Heart left ventricle (tissue), 16 donors: ENCODE measurements at regions of chr2 and their contacts with region 1.

Region 1: GRCh38 chr2:120680136-120680761 is 55.4 kb upstream of the GLI2 start:
- DNase-seq: peak; percentile 76 to 89 (median 79)
- ATAC-seq: peak; percentile 49 to 89 (median 78)
- H3K4me3 ChIP-seq: no peak overlapping the region
- H3K27ac ChIP-seq: no peak overlapping the region
- H3K4me1 ChIP-seq: peaks cover 0 to 5% (median 0%) of the 10 kb centered on the region in 12 donors
- H3K27me3 ChIP-seq: peaks cover 0 to 39% (median 9%) of the 10 kb centered on the region in 9 donors
- CTCF ChIP-seq: peak; percentile 32 to 62 (median 49)
- POLR2A ChIP-seq: no peak

Region 2: DNA sequence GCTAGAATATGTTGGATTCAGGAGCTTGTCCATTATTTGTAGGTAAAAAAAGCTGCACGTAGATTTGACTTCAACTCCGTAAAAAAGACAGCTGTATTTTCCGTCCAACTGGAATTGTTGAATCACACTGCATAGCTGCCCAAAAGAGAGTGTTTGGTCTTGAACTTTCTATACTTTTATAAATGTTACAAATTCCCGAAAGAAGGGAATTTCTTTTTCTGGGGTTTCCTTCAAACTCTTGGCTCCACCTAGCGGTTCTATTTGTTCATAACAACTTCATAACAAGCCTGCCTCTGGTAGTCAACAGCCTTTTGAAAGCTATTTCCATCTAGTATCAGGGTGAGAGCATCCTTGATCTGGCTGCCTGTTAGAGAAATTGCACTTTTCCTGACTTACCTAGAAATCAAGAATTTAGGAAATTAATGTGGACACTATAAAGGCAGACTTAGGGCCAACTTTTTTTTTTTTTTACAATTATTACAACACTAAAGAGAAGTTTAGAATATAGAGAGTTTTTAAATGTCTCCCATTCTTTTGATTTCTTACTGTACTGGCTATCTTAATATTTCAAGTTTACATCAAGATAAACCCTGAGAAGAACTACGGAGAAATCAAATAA is 505.2 kb before region 1 on chr2:
- intact Hi-C with region 1: loop called in 1 of 10 experiments (anchors 10 kb)
- DNase-seq: no peak
- ATAC-seq: peak in 2 of 4 donors; percentile 18 to 51
- H3K4me3 ChIP-seq: no peak overlapping the region
- H3K27ac ChIP-seq: no peak overlapping the region
- H3K4me1 ChIP-seq: peaks cover 0 to 20% (median 8%) of the 10 kb centered on the region in 12 donors
- H3K27me3 ChIP-seq: no peaks in the 10 kb centered on the region
- CTCF ChIP-seq: peak; percentile 66 to 83 (median 77)
- POLR2A ChIP-seq: no peak

Region 3: DNA sequence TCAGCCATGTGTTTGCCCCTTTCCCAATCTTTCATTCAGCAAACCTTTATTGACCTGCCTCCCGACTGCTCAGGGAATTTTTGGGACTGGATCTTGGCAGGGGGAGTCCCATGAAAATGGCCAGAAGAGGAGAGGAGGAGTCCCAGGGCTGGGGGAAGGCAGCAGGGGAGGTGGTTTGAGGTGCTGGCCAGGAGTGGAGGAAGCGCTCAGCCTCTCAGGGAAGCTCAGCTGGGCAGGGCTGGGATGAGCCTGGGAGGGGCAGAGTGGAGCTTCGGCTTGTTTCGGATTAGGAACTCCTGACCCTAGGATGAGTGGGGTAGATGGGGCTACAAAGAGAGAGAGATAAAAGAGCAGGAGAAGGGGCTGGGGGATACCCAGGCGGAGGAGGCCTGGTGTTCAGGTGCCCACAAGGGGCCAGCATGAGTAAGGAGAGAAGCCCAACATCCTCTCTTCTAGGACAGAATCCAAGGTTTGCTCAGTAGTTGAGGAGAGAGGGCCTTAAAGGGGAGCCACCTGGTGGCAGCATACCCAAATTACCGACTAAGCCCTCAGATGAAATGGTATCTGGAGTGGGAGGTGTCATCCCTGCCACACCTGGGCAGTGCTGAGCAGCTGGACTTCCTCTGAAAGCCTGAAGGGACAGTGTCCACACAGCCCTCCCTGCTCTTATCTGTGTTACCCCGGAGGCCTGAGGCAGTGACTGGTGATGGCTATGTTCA is 243.2 kb before region 1 on chr2:
- intact Hi-C with region 1: loop called in 1 of 10 experiments (anchors 10 kb)
- DNase-seq: no peak
- ATAC-seq: no peak
- H3K4me3 ChIP-seq: no peak overlapping the region
- H3K27ac ChIP-seq: no peak overlapping the region
- H3K4me1 ChIP-seq: peaks cover 0 to 4% (median 4%) of the 10 kb centered on the region in 12 donors
- H3K27me3 ChIP-seq: peaks cover 0 to 29% (median 9%) of the 10 kb centered on the region in 9 donors
- CTCF ChIP-seq: peak in 8 of 12 donors; percentile 6 to 35 (median 17)
- POLR2A ChIP-seq: no peak

Region 4: GRCh38 chr2:120511947-120512710 is 168.1 kb before region 1 on chr2:
- intact Hi-C with region 1: loop called in 5 of 10 experiments (anchors 5 to 10 kb)
- DNase-seq: no peak
- ATAC-seq: peak in 2 of 4 donors; percentile 37 to 46
- H3K4me3 ChIP-seq: no peak overlapping the region
- H3K27ac ChIP-seq: no peak overlapping the region
- H3K4me1 ChIP-seq: peaks cover 0 to 20% (median 8%) of the 10 kb centered on the region in 12 donors
- H3K27me3 ChIP-seq: no peaks in the 10 kb centered on the region
- CTCF ChIP-seq: peak in 2 of 12 donors; percentile 11 to 23
- POLR2A ChIP-seq: no peak

Region 5: DNA sequence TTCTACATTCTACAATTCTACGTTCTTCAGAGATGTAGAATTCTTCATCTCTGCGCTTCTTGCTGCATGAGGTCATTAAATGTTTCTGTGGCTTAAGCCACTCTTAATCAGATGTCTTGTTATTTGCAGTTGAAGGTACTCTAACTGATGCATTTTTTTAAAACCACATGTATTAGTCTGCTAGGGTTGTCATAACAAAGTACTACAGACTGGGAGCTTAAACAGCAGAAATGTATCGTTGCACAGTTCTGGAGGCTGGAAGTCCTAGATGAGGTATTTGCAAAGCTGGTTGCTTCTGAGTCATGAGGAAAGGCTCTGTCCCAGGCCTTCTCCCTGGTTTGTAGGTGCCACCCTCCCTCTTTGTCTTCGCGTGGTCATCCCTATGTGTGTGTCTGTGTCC is 120.8 kb before region 1 on chr2:
- intact Hi-C with region 1: loop called in 5 of 10 experiments (anchors 5 to 10 kb)
- DNase-seq: no peak
- ATAC-seq: peak in 1 of 4 donors; percentile 5
- H3K4me3 ChIP-seq: no peak overlapping the region
- H3K27ac ChIP-seq: no peak overlapping the region
- H3K4me1 ChIP-seq: peaks cover 0 to 12% (median 0%) of the 10 kb centered on the region in 12 donors
- H3K27me3 ChIP-seq: no peaks in the 10 kb centered on the region
- CTCF ChIP-seq: no peak
- POLR2A ChIP-seq: no peak

Region 6: DNA sequence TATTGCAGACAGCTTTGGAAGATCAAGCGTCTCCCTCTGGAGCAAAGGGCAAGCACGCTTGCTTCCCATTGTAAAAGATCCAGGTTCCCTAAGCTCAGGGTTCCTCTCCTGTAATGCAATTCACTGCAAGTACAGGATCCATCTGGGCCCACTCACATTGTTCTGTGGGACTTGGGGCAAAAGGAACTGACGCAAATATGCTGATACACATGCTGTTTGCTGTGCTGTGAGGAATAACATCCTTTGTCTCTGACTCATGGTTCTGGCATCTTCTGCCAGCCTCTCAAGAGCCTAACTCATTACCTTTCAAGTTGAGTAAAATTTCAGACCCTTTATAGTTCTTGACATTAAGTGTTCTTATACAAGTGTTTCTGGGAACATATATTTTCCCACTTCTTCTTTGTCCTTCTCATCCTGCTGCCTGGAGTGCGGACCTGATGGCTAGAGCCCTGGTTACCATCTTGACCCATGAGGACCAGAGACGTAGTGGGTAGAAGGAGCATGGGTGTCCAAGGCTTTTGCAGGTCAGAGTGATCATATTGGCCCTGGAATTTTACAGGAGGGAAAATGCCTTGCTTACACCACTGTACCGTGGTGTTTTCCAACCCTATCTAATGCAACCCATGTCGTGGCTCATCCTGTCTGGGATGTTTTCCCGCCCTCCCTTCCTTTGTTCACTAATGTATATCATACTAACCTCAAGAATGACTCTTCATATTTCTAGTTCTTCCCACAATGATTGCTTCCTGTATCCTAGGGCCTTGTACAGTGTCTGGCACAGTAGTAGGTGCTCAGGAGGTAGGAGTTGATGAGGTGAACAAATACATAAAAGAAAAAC is 90.3 kb before region 1 on chr2:
- intact Hi-C with region 1: loop called in 2 of 10 experiments (anchors 10 kb)
- DNase-seq: no peak
- ATAC-seq: peak in 1 of 4 donors; percentile 20
- H3K4me3 ChIP-seq: no peak overlapping the region
- H3K27ac ChIP-seq: peak overlapping the region in 1 of 12 donors; percentile 40
- H3K4me1 ChIP-seq: peaks cover 0 to 15% (median 0%) of the 10 kb centered on the region in 12 donors
- H3K27me3 ChIP-seq: peaks cover 0 to 32% (median 14%) of the 10 kb centered on the region in 9 donors
- CTCF ChIP-seq: no peak
- POLR2A ChIP-seq: no peak